A673 (cell line): ENCODE measurements at regions of chr1 and their contacts with region 1.

Region 1: GRCh38 chr1:7247158-7247557 is 461.9 kb downstream of the CAMTA1 start:
- DNase-seq: no peak
- H3K4me3 ChIP-seq: no peak overlapping the region
- H3K27ac ChIP-seq: no peak overlapping the region
- H3K4me1 ChIP-seq: no peaks in the 10 kb centered on the region
- H3K27me3 ChIP-seq: no peaks in the 10 kb centered on the region
- CTCF ChIP-seq: no peak

Region 2: GRCh38 chr1:7235871-7236517 is 11.2 kb before region 1 on chr1:
- CTCF ChIA-PET with region 1: interaction called, 10 read pairs
- POLR2A ChIA-PET with region 1: no interaction called
- intact Hi-C with region 1: no loop called
- DNase-seq: no peak
- H3K4me3 ChIP-seq: no peak overlapping the region
- H3K27ac ChIP-seq: no peak overlapping the region
- H3K4me1 ChIP-seq: no peaks in the 10 kb centered on the region
- H3K27me3 ChIP-seq: no peaks in the 10 kb centered on the region
- CTCF ChIP-seq: no peak

Region 3: DNA sequence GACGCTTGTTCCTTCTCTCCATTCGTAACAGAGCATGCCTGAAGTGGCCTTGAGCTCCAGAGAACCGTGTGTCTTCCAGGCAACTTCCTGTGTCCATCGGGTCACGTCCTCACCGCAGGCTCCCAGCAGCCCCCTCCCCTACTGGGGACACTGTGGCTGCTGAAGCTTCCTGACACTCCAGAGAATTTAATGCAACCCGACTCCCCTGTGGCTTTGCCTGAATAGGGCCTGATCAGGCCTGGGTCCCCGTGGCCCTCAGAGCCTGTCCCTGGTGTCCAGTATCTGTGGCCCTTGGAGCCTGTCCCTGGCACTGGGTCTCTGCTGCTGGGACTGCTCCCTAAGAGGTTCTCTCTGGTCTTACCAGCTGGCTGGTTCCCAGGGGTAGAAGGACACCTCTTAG is 304.3 kb after region 1 on chr1:
- CTCF ChIA-PET with region 1: interaction called, 12 read pairs
- POLR2A ChIA-PET with region 1: no interaction called
- intact Hi-C with region 1: no loop called
- DNase-seq: no peak
- H3K4me3 ChIP-seq: no peak overlapping the region
- H3K27ac ChIP-seq: no peak overlapping the region
- H3K4me1 ChIP-seq: peaks cover 16% of the 10 kb centered on the region
- H3K27me3 ChIP-seq: no peaks in the 10 kb centered on the region
- CTCF ChIP-seq: no peak

Region 4: GRCh38 chr1:7993593-7994479 is 746.7 kb after region 1 on chr1:
- CTCF ChIA-PET with region 1: no interaction called
- POLR2A ChIA-PET with region 1: no interaction called
- intact Hi-C with region 1: no loop called
- DNase-seq: no peak
- H3K4me3 ChIP-seq: no peak overlapping the region
- H3K27ac ChIP-seq: no peak overlapping the region
- H3K4me1 ChIP-seq: no peaks in the 10 kb centered on the region
- H3K27me3 ChIP-seq: no peaks in the 10 kb centered on the region
- CTCF ChIP-seq: no peak